Body of pancreas (tissue), 4 donors: ENCODE measurements at regions of chrX and their contacts with region 1.

Region 1: GRCh38 chrX:107776649-107777535 is 641 bp upstream of the NCBP2L start:
- DNase-seq: peak; percentile 80 to 90 (median 86)
- ATAC-seq: peak; percentile 64
- H3K4me3 ChIP-seq: no peak overlapping the region
- H3K27ac ChIP-seq: peak overlapping the region in 3 of 4 donors; percentile 84 to 89 (median 87)
- H3K4me1 ChIP-seq: peaks cover 29% of the 10 kb centered on the region
- H3K27me3 ChIP-seq: no peaks in the 10 kb centered on the region
- CTCF ChIP-seq: peak; percentile 42 to 90 (median 71)
- POLR2A ChIP-seq: no peak

Region 2: GRCh38 chrX:107672955-107673378 is 103.9 kb before region 1 on chrX:
- intact Hi-C with region 1: loop called (anchors 10 kb)
- DNase-seq: peak; percentile 58 to 75 (median 65)
- ATAC-seq: peak; percentile 45
- H3K4me3 ChIP-seq: no peak overlapping the region
- H3K27ac ChIP-seq: peak overlapping the region; percentile 5 to 77 (median 40)
- H3K4me1 ChIP-seq: peaks cover 48% of the 10 kb centered on the region
- H3K27me3 ChIP-seq: no peaks in the 10 kb centered on the region
- CTCF ChIP-seq: peak; percentile 21 to 82 (median 70)
- POLR2A ChIP-seq: no peak